HEK293 (cell line): ENCODE measurements at regions of chr5 and their contacts with region 1.

Region 1: DNA sequence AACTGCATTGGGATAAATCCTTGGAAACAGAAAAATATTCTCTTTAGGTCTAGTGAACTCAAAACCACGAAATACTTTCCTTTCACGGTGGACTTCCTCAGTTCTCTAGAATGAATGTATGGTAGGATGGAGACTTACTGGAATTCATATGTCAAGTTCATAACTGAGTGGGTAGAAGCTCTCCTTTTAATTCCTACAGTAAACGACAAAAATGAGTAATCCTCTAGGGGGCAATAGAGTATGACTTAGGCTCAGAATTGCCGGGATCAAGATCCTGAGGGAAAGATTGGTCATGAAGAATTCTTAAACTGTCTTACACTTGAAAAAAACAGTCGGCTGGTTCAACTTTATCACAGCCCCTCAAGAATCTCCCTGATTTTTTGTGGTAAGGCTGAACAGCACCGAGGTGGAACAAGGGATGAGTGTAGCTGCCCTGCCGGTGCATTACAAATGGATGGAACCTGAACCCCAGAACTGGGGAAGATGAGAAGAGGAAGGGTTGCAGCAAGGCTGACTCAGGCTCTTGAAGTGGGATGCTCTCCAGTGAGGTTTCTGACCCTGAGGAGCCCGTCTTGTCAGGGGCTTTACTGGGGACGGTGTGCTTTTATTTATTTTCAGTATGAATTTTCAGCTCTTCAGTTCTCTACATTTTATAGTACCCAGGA is 14.0 kb upstream of the LOX start:
- H3K4me3 ChIP-seq: no peak overlapping the region
- H3K27ac ChIP-seq: no peak overlapping the region
- H3K4me1 ChIP-seq: no peaks in the 10 kb centered on the region
- CTCF ChIP-seq: no peak

Region 2: DNA sequence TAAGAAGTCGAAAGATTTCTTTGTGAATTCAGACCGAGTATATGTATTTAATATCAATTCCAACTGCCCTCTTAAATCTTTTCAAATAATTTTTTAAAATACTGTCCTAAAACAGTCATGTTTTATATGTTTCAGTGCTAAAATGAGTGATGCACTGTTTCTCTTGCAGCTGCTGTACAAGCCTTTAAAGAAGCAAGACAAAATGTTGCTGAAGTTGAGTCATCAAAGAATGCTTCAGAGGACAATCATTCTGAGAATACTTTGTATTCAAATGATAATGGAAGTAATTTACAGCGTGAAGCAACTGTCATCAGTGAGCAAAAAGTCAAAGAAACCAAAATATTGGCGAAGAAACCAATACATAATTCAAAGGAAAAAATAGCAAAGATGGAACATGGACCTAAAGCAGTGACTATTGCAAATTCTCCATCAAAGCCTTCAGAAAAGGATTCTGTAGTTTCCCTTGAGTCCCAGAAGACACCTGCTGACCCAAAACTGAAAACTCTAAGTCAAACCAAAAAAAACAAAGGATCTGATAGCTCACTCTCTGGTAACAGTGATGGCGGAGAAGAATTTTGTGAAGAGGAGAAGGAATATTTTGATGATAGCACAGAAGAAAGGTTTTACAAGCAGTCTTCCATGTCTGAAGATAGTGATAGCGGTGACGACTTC is 72.0 kb before region 1 on chr5:
- CTCF ChIA-PET with region 1: no interaction called
- POLR2A ChIA-PET with region 1: no interaction called
- H3K4me3 ChIP-seq: no peak overlapping the region
- H3K27ac ChIP-seq: no peak overlapping the region
- H3K4me1 ChIP-seq: no peaks in the 10 kb centered on the region
- CTCF ChIP-seq: no peak

Region 3: DNA sequence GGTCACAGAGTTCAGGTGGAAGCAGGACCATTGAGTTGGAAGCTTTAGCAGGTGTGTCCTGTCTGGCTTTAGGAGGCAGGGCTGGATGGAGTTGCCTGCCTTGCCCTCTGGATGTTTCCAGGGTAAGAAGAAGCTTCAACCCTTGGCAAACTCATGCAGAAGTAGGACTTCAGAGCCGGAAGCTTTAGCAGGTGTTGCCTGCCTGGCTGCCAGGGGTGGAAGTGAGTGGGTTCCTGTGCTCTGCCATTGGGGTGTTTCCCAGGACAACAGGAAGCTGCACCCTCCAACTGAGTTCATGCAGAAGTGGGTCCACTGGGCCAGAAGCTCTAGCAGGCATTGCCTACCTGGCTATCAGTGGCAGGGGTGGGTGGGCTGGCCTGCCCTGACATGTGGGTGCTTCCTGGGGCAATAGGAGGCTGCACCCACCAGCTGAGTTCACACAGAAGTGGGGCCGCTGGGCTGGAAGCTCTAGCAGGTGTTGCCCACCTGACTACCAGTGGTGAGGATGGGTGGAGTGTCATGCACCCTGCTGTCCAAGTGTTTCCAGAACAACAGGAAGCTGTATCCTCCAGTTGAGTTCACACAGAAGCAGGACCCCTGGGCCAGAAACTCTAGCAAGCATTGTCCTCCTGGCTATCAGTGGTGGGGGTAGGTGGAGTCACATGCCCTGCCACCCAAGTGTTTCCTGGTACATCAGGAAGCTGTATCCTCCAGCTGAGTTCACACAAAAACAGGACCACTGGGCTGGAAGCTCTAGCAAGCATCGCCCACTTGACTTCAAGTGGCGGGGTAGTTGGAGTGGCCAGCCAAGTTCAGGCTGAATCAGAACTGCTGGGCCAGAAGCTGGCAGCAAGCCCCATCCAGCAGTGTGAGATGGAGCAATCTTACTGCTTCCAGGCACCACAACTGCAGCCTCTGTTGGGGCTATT is 38.6 kb before region 1 on chr5:
- CTCF ChIA-PET with region 1: no interaction called
- POLR2A ChIA-PET with region 1: no interaction called
- H3K4me3 ChIP-seq: no peak overlapping the region
- H3K27ac ChIP-seq: no peak overlapping the region
- H3K4me1 ChIP-seq: no peaks in the 10 kb centered on the region
- CTCF ChIP-seq: no peak

Region 4: DNA sequence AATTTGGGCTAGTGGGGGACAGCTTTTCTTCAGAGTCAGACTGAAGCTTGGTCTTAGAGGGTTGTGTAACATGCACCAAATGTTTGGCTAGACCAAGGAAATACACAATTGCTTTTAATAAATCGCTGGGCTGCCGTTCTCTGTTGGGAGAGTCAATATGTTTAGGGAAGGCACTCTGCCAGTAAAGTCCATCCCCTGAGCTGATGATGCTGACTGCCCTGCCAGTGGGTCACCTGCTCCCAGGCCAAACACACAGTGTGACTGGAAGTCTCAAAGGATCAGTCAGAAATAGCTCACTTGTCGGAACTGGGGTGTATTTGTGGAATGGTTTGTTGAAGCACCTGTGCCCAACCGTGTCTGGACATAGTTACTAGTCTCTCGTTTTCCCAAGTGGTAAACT is 19.4 kb after region 1 on chr5:
- CTCF ChIA-PET with region 1: interaction called, 10 read pairs
- POLR2A ChIA-PET with region 1: no interaction called
- H3K4me3 ChIP-seq: no peak overlapping the region
- H3K27ac ChIP-seq: no peak overlapping the region
- H3K4me1 ChIP-seq: no peaks in the 10 kb centered on the region
- CTCF ChIP-seq: no peak

Region 5: DNA sequence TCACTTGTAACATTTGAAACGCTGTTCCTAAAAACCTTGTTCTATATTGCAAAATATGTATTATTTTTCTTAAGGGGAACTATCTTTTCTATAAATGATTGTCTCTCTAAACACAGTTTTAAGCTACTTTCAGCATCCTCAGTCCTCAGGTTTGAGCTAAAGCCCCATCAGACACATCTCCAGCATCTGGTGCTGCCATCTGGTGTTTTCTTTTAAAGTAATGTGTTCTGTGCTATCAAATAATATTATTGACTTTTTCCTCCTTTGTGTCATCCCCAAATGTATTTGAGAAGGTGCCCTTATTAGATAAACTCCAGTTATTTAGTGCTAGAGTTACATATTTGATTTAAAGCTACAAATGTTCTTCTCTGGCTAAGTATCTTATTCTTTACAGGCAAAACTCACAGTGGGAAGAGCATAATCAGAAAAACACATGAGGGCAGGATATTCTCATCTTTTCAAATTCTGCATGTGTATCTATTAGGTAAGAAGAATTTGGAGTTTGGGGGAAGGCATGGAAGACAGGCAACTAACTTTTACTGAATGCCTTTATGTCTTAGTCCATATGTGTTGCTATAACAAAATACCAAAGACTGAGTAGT is 64.8 kb after region 1 on chr5:
- CTCF ChIA-PET with region 1: interaction called, 21 read pairs
- POLR2A ChIA-PET with region 1: no interaction called
- H3K4me3 ChIP-seq: no peak overlapping the region
- H3K27ac ChIP-seq: no peak overlapping the region
- H3K4me1 ChIP-seq: no peaks in the 10 kb centered on the region
- CTCF ChIP-seq: no peak